Tibial artery (tissue), 4 donors: ENCODE measurements at regions of chr10 and their contacts with region 1.

Region 1: DNA sequence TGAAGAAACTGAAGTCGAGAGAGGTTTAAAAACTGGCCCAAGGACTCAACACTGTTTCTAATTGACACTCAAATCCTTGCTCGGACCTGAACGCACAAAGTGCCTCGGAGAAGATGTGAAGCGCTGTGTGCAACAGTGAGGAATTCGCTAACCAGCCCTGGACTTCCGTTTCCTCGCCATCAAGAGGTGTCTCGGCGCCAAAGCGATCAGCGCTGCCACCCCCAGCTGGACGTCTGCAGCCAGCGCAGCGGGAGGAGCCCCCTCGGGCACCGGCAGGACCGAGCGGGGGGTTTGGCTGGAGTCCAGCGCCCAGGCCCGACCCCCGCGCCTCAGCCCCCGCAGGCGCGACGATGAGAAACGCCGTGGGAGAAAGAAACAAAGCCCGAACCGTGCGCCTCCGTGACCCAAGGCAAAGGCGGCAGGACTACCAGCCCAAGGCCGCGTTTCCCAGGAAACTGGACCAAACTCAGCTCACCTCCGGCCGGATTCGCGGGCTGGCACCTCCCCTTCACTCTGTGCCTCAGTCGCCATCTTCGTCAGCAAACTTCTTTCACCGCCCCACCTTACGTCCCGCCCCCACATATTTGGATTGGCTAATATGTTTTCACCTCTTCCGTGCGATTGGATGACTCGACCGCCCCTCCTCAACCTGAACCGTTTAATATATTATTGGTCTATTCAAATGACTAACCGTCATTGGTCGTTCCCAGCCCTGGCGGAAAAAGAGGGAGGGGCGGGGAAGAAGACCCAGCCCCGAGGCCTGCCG is at the start of gene ARHGAP19:
- DNase-seq: peak; percentile 98
- H3K4me3 ChIP-seq: peak within 1 kb of the TSS; percentile 76 to 95
- H3K27ac ChIP-seq: peak within 1 kb of the TSS; percentile 92 to 95
- H3K4me1 ChIP-seq: peaks cover 0 to 7% (median 2%) of the 10 kb centered on the region in 4 donors
- H3K27me3 ChIP-seq: no peaks in the 10 kb centered on the region
- CTCF ChIP-seq: peak in 1 of 2 experiments; percentile 21

Region 2: DNA sequence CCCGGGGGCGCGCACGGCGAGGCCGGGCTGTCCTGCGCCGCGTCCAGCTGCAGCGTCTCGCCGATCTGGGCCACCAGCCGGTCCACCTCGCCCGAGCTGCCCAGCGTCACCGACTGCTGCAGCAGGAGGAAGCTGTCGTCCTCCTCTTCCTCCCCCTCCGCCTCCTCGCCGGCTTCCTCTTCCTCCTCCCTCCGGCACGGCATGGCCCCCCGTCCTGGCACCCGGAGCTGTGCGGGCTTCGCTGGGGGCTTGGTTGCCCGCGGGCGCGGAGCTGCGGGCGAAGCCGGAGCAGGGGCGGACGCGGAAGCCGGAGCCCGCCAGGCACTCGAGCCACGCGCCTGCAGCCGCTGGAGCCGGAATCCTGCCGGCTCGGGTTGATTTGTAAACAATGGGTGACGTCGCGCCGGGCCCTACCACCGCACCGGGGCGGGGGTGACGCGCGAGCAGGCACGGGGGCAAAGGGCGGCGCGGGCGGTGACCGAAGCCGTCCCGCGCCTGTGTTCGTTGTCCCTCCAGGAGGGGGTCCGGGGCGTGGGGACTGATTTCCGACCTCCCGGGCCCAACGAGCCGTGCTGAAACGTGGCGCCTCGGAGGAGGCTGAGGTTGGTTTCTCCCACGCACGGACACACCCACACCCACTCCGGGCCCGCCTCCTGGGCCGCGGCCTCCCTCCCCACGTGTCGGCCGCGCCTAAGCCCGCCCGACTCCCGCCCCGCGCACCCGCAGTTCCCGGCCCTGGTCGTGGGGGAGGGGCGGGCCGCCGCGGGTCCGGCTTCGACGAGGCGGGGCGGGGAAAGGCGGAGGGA is 42.3 kb after region 1 on chr10 and contains the start of gene FRAT2:
- intact Hi-C with region 1: loop called (anchors 5 kb)
- DNase-seq: peak; percentile 90 to 94
- H3K4me3 ChIP-seq: peak within 1 kb of the TSS; percentile 75 to 97
- H3K27ac ChIP-seq: peak within 1 kb of the TSS; percentile 77 to 93
- H3K4me1 ChIP-seq: peaks cover 0 to 68% (median 38%) of the 10 kb centered on the region in 4 donors
- H3K27me3 ChIP-seq: no peaks in the 10 kb centered on the region
- CTCF ChIP-seq: no peak